ENCODE measurements at regions of chr22 and their contacts with region 1.

Region 1: DNA sequence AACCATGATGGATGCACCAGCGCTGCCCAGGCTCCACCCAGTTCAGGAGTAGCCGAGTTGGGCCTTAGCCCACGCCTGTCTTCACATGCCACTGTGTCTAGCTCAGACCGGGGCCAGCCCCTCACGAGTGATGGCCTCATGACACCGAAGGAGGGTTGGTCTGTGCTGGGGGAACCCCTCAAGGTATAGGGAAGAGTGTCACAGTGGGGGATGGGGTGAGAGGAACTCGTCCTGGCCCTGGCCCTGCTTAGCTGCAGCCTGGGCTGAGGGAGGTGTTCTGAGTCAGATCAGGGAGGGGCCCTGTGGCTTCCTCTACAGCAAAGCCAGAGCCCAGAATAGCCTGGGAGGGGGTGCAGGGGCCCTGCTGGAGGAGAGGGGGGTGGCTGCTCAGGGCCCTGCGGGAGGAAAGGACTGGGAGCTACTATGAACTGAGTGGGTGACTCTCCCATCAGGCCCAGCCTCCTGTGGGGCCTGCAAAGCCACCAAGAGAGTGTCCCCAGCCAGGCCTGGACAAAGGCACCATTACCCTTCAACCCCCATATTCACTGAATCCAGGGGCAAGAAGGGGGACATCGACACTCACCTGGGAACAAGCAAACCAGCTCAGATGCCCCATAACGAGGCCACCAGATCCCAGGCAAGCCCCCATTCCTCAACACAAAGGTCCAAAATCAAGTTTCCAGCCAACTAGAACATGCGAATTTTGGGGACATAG is 41.2 kb downstream of the IGLL5 start:
- DNase-seq: peak; percentile 89
- CTCF ChIP-seq: no peak

Region 2: GRCh38 chr22:22655452-22656290 is 273.2 kb before region 1 on chr22:
- CTCF ChIA-PET with region 1: no interaction called
- POLR2A ChIA-PET with region 1: no interaction called
- DNase-seq: no peak
- CTCF ChIP-seq: no peak

Region 3: DNA sequence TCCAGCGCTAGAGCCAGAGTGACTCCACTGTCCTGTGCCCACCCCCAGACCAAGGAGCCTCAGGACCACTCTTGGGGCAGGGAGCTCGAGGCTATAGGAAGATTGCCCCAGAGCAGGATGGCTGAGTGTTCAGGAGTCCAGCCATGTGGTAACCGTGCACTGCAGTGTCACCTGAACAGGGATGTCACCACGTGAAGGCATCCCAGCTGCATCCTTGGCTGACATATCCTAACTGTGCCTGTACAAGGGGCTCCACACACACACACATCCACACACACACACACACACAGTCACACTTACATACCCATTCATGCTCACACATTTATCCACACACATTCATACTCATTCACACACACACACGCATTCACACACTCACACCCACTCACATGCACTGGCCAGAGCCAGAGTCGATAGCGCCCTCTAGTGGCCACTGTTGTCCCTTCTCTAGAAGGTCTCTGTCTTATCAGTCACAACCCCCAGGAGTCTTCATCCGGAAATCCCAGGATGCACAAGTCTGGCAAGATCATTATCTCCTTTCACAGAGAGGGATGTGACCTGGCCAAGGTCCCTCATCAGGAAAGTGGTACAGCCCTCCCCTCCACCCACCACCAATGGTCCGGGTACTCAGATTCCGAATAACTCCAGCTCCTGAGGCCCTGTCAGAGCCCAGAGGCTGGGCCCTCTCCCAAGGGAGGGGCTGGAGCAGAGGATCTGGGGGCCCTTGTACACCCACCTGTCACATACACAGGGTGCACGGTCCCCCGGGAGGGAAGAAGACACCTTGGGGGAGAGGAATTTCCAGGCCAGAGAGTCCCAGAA is 13.9 kb after region 1 on chr22:
- CTCF ChIA-PET with region 1: interaction called, 47 read pairs
- POLR2A ChIA-PET with region 1: no interaction called
- DNase-seq: peak; percentile 69
- CTCF ChIP-seq: peak; percentile 69

Measured in GM10248 (cell line).